ENCODE measurements at regions of chr5 and their contacts with region 1.

Region 1: GRCh38 chr5:160165137-160166068 is 46.2 kb upstream of the PWWP2A start:
- DNase-seq: peak; percentile 91

Region 2: GRCh38 chr5:160119142-160119904 is 46.1 kb before region 1 on chr5 and contains the start of gene PWWP2A:
- intact Hi-C with region 1: loop called (anchors 5 kb)
- DNase-seq: peak; percentile 99
- total RNA-seq, gene PWWP2A: 11.7 TPM

Region 3: GRCh38 chr5:160133071-160133917 is 32.1 kb before region 1 on chr5:
- intact Hi-C with region 1: loop called (anchors 5 kb)
- DNase-seq: no peak

Region 4: GRCh38 chr5:160199410-160199911 is 34.1 kb after region 1 on chr5:
- intact Hi-C with region 1: loop called (anchors 1 kb)
- DNase-seq: peak; percentile 91

Region 5: GRCh38 chr5:160324886-160325285 is 159.5 kb after region 1 on chr5:
- intact Hi-C with region 1: no loop called
- DNase-seq: peak; percentile 1

Region 6: DNA sequence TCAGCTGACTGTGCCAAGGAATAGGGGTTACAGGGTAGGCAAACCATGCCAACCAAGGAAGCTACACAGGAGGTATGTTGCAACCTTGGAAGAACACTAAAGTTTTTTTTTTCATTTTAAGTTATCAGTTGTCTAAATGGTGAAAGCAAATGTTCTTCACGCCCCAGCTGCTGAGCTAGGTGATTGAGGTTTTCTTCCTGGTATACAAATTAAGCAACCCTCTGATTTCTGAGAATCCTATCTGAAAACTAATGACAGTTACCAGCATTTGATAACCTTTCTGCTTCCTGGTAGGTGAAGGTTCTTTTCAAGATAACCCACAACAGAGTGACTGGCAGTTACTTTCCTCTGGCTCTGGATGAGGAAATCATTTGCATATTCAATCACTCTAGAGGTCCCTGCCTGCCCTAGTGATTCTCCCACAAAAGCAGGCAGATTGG is 491.7 kb after region 1 on chr5:
- intact Hi-C with region 1: no loop called
- DNase-seq: no peak

Measured in cardiac septum (tissue), 1 donor.